Left colon (tissue), 2 donors: ENCODE measurements at regions of chr9 and their contacts with region 1.

Region 1: GRCh38 chr9:16726718-16727451 is 143.6 kb downstream of the BNC2 start:
- DNase-seq: peak; percentile 53 to 61
- ATAC-seq: peak; percentile 93

Region 2: GRCh38 chr9:16396389-16396788 is 330.5 kb before region 1 on chr9:
- intact Hi-C with region 1: no loop called
- DNase-seq: no peak
- ATAC-seq: no peak

Region 3: GRCh38 chr9:16869882-16870595 is 143.2 kb after region 1 on chr9:
- intact Hi-C with region 1: loop called in 1 of 2 experiments (anchors 10 kb)
- DNase-seq: no peak
- ATAC-seq: peak; percentile 59